ENCODE measurements at regions of chr6 and their contacts with region 1.

Region 1: GRCh38 chr6:16243055-16243454 is 4.7 kb downstream of the GMPR start:
- DNase-seq: peak; percentile 87
- ATAC-seq: peak; percentile 39
- H3K4me3 ChIP-seq: no peak overlapping the region
- H3K27ac ChIP-seq: no peak overlapping the region
- H3K4me1 ChIP-seq: peaks cover 18% of the 10 kb centered on the region
- H3K27me3 ChIP-seq: no peaks in the 10 kb centered on the region
- CTCF ChIP-seq: no peak
- POLR2A ChIP-seq: no peak
- RAD21 ChIP-seq: no peak

Region 2: GRCh38 chr6:16277101-16277981 is 34.3 kb after region 1 on chr6:
- CTCF ChIA-PET with region 1: interaction called, 7 read pairs
- POLR2A ChIA-PET with region 1: no interaction called
- dilution Hi-C with region 1: no loop called
- in situ Hi-C with region 1: no loop called
- intact Hi-C with region 1: loop called (anchors 1 kb)
- DNase-seq: peak; percentile 93
- ATAC-seq: peak; percentile 93
- H3K4me3 ChIP-seq: no peak overlapping the region
- H3K27ac ChIP-seq: no peak overlapping the region
- H3K4me1 ChIP-seq: peaks cover 14% of the 10 kb centered on the region
- H3K27me3 ChIP-seq: no peaks in the 10 kb centered on the region
- CTCF ChIP-seq: peak; percentile 80
- POLR2A ChIP-seq: no peak
- RAD21 ChIP-seq: peak; percentile 70

Measured in IMR-90 (cell line).